GM13976 (cell line): ENCODE measurements at regions of chr2 and their contacts with region 1.

Region 1: DNA sequence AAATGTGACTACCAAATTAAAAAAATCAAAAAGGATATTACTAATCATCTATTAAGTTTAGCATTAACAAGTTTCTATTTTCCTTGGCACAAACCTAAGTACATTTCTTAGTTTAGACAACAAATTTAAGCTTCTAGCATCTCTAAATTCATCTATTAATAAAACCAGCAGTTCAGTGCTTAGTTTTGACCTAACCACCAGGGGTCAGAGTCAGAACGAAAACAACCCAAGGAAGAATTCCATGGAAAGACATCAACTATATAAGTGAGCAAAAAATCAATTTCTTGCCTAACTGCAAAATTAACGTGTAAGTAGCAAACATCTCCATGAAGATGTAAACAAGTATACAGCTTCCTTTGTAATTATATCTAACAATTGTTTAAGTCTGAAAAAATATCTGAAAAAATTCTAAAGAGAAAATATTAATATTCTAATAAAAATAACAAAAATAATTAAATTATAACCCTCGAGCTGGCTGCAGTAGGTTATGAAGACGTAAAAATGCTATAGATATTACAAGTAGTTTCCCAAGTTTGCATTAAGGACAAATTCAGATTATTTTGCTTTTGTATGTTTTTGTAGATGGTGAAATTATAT is 83.7 kb downstream of the CERKL start:
- DNase-seq: no peak
- CTCF ChIP-seq: no peak

Region 2: GRCh38 chr2:181077128-181077709 is 496.0 kb before region 1 on chr2:
- in situ Hi-C with region 1: loop called (anchors 25 kb)
- DNase-seq: peak; percentile 37
- CTCF ChIP-seq: peak; percentile 66

Region 3: DNA sequence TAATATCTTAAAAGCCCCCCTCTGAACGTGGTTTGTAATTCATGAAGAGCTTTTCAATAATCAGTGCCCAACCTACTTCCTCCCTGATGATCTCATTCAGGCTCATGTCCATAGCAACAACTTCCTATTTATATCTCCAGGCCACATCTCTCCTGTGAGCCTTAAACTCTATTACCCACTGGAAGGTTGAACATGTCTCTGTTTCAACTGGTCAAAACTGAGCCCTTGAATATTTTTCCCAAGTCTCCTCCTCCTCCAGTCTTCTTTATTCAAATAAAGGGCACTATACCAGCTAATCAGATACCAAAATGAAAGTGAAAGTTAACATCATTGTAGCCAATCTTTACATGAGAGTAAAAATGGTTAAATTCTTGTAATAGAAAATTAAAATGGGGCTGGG is 179.8 kb before region 1 on chr2:
- in situ Hi-C with region 1: no loop called
- DNase-seq: peak; percentile 51
- CTCF ChIP-seq: no peak

Region 4: DNA sequence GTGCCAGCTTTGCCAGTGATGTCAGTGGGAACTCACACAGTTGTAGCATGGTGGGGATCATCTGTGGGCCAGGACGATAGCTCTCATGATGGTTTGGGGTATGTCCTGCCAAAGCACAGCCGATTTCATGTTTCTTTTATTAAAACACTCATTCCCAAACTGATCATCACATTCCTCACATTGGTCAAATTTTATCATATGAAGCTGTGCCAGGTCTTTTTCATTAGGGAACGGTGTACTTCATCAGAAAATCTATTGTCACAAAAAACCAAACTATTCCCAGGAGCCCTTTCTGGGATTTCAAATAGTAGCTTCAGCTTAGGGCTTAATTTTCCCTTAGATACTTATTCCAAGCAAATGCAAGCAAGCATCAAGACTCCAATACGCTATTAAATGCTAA is 74.0 kb before region 1 on chr2:
- in situ Hi-C with region 1: no loop called
- DNase-seq: no peak
- CTCF ChIP-seq: no peak

Region 5: GRCh38 chr2:181991171-181991885 is 418.1 kb after region 1 on chr2:
- in situ Hi-C with region 1: no loop called
- DNase-seq: peak; percentile 63
- CTCF ChIP-seq: no peak

Region 6: DNA sequence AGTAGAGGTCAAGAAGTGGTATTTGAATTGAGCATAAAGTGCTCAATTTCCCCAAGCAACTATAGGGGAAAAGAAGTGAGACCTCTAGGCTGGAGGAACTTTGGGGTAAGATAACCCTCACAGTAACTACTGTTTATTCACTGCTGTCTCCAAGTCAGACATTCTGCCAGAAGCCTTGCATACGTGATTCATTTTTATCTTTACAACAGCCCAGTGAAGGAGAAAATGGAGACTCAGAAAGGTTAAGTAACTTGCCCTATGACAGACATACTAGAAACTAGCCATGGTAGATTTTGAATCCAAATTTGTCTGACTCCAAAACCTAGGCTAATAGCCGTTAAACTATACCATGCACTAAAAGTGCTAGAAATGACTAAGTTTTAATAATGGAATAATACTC is 1171.3 kb after region 1 on chr2:
- in situ Hi-C with region 1: no loop called
- DNase-seq: no peak
- CTCF ChIP-seq: no peak